GM12878 (cell line): ENCODE measurements at regions of chr14 and their contacts with region 1.

Region 1: DNA sequence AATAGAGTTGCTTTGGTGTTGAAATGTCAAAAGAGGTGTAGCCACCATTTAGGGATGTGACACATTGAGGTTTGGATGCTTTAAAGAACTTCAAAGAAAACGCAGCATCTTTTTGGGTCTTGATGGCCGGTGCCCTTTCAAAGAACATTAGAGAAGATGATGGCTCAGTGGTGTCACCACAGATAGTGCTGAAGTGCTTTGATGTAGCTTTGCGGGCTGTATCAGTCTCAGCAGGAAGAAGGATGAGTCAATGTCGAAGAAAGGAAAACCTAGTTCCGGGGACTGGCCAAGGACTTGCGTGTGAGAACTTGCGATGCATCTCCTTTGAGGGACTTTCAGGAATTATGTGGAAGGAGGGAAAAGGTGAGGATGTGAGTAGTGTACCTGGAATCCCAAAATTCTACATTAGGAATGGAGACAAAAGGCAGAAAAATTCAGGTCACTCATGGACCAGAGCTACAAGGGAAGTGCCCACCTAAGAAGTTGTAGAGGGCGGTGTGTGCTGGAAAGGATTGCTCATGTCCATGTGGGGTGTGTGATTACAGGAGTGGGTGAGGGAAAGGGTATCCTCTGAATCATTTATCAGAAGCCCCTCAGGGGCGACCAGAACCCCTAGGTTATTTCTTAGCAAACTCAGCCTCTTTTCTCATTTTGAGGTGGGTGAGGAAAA is 39.7 kb upstream of the GZMB start:
- DNase-seq: peak; percentile 71
- ATAC-seq: peak; percentile 86
- H3K4me3 ChIP-seq: peak overlapping the region; percentile 75
- H3K27ac ChIP-seq: peak overlapping the region; percentile 99
- H3K4me1 ChIP-seq: peaks cover 36% of the 10 kb centered on the region
- H3K27me3 ChIP-seq: no peaks in the 10 kb centered on the region
- CTCF ChIP-seq: no peak
- EP300 ChIP-seq: 0 out of 4 replicates have a peak, but pooled peaks of 1 of the 2 experiments have one; percentile 5
- POLR2A ChIP-seq: no peak
- RAD21 ChIP-seq: no peak

Region 2: DNA sequence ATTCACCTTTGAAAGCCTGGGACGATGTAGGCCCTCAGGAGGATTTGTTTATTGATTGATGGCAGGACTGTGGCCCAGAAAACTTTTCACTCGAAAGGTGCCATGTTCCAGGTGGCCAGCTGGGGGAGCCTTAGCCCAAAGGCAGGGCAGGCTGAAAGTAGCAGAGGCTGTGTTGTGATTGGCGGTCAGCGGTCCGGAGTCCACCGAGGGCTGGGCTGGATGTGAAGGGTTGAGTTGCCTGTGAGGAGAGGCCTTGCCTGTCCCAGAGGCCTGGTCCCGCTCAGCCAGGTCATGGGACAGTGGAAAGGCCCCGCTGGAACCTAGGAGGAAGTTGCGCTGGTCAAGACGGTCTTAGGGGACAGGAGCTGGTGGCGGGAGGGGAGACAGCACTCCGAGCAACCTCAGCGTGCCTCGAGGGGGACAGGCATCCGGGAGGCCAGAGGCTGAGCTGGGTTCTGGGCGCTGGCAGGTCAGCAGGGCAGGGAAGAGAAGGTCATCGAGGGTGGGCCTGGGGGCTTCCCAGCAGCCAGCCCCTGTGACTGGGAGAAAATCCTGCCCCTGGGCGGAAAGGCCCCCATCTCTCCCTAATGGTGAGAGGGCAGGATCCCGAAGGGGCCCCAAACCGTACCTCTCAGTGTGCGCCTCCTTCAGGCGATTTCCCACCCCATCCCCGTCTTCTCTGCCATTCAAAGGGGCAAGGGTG is 191.9 kb before region 1 on chr14:
- CTCF ChIA-PET with region 1: interaction called, 11 read pairs
- POLR2A ChIA-PET with region 1: no interaction called
- RAD21 ChIA-PET with region 1: no interaction called
- SMC1A ChIA-PET with region 1: interaction called, 4 read pairs
- in situ Hi-C with region 1: no loop called
- intact Hi-C with region 1: loop called (anchors 2 kb)
- DNase-seq: peak; percentile 17
- ATAC-seq: peak; percentile 99
- H3K4me3 ChIP-seq: no peak overlapping the region
- H3K27ac ChIP-seq: no peak overlapping the region
- H3K4me1 ChIP-seq: peaks cover 13% of the 10 kb centered on the region
- H3K27me3 ChIP-seq: no peaks in the 10 kb centered on the region
- CTCF ChIP-seq: peak; percentile 78 to 97 (median 90)
- EP300 ChIP-seq: no peak
- POLR2A ChIP-seq: peak; percentile 28; the same call in 1 of the 2 replicates
- RAD21 ChIP-seq: peak; percentile 90

Region 3: DNA sequence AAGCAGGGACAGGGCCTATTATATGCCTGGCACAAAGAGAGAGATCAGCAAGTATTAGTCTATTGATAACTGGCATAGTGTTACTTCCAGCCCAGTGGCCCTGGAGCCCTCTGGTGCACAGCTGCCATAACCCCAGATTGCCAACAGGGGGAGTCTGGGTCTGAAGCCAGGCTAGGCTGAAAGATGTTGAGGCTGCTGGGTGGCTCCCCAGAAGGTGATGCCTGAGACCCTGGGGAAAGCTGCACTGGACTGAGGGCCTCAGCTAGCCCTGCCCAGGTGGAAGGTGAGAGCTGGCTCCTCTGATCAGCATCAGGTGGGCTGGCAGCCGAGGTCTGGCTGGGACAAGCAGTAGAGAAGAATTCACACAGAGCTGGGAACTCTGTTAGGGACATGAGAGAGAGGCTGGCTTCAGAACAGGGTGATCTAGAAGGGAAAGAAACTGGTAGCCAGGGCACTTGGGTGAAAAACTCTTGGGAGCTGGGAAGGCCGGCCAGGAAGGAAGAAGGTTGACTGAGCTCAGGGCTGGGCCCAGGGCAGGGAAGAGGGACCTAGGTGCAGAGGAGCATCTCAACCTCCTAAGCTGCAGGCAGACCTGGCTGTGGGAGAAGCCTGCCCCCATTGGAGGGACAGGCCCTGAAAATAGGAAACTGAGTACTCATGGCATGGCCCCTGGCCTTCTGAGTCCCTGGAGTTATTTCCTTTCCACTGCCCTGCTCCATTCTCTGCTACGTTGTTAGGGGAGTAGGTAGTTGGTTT is 68.1 kb before region 1 on chr14:
- CTCF ChIA-PET with region 1: interaction called, 24 read pairs
- POLR2A ChIA-PET with region 1: interaction called, 4 read pairs
- RAD21 ChIA-PET with region 1: interaction called, 8 read pairs
- SMC1A ChIA-PET with region 1: interaction called, 15 read pairs
- in situ Hi-C with region 1: loop called (anchors 5 kb)
- intact Hi-C with region 1: no loop called
- DNase-seq: no peak
- ATAC-seq: peak; percentile 98
- H3K4me3 ChIP-seq: no peak overlapping the region
- H3K27ac ChIP-seq: no peak overlapping the region
- H3K4me1 ChIP-seq: peaks cover 8% of the 10 kb centered on the region
- H3K27me3 ChIP-seq: no peaks in the 10 kb centered on the region
- CTCF ChIP-seq: peak; percentile 73 to 98 (median 97)
- EP300 ChIP-seq: no peak
- POLR2A ChIP-seq: no peak
- RAD21 ChIP-seq: peak; percentile 93

Region 4: DNA sequence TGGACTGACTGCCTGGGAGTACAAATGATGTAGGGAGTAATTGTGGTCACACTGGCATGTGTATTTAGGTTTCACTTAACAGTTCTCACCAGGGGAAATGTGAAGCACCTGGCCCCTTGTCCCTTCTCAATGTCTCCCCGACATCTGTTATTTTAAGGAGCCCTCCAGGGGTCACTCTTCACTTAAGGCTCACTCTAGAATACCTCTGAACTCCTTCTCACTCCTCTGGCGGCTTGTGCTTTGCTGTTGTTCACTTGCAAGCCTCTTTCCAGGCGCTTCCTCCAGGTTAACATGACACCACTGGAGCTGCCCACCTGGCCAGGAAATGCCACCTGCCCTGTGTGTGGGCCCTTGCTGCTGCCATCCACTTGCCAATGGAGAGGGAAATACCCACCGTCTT is 16.8 kb after region 1 on chr14:
- CTCF ChIA-PET with region 1: interaction called, 7 read pairs
- POLR2A ChIA-PET with region 1: interaction called, 3 read pairs
- RAD21 ChIA-PET with region 1: interaction called, 6 read pairs
- SMC1A ChIA-PET with region 1: interaction called, 16 read pairs
- in situ Hi-C with region 1: no loop called
- intact Hi-C with region 1: no loop called
- DNase-seq: no peak
- ATAC-seq: peak; percentile 67
- H3K4me3 ChIP-seq: no peak overlapping the region
- H3K27ac ChIP-seq: no peak overlapping the region
- H3K4me1 ChIP-seq: peaks cover 18% of the 10 kb centered on the region
- H3K27me3 ChIP-seq: no peaks in the 10 kb centered on the region
- CTCF ChIP-seq: peak; percentile 30 to 37 (median 36); a peak in 5 of 6 replicates
- EP300 ChIP-seq: no peak
- POLR2A ChIP-seq: no peak
- RAD21 ChIP-seq: peak; percentile 58